Panc1 (cell line): ENCODE measurements at regions of chr5 and their contacts with region 1.

Region 1: GRCh38 chr5:164412531-164412930 is 907.1 kb downstream of the MAT2B start:
- DNase-seq: no peak
- ATAC-seq: no peak
- H3K4me3 ChIP-seq: no peak overlapping the region
- H3K27ac ChIP-seq: no peak overlapping the region
- H3K4me1 ChIP-seq: no peaks in the 10 kb centered on the region
- H3K27me3 ChIP-seq: no peaks in the 10 kb centered on the region
- CTCF ChIP-seq: no peak

Region 2: DNA sequence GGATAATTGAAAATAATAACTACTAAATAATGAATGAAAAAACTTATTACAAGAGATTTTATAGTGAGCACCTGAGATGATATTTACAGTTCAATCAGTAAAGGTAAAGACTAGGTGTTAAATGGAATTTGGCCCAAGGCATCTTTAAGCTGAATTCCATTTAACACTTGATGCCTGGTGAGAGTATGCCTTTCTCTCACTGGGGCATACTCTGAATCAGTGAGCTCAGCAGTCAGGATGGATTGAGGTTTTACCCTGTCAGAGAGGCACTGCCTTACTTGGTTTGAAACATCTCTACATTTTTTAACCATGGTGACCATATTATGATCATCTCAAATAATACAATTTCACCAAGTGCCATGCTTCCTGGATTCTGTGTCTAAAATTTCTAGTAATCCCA is 509.2 kb after region 1 on chr5:
- CTCF ChIA-PET with region 1: no interaction called
- POLR2A ChIA-PET with region 1: interaction called, 11 read pairs
- in situ Hi-C with region 1: no loop called
- intact Hi-C with region 1: no loop called
- DNase-seq: no peak
- ATAC-seq: no peak
- H3K4me3 ChIP-seq: no peak overlapping the region
- H3K27ac ChIP-seq: no peak overlapping the region
- H3K4me1 ChIP-seq: no peaks in the 10 kb centered on the region
- H3K27me3 ChIP-seq: no peaks in the 10 kb centered on the region
- CTCF ChIP-seq: no peak